Activated naive CD4-positive, alpha-beta T cell treated with anti-CD3 and anti-CD28 coated beads for 36 hours (primary cell): ENCODE measurements at regions of chr12 and their contacts with region 1.

Region 1: GRCh38 chr12:93894391-93895088 is 217.4 kb downstream of the CRADD start:
- DNase-seq: no peak
- H3K4me3 Mint-ChIP-seq: no peak overlapping the region
- H3K27ac Mint-ChIP-seq: no peak overlapping the region
- H3K4me1 Mint-ChIP-seq: peaks cover 18% of the 10 kb centered on the region
- H3K27me3 Mint-ChIP-seq: no peaks in the 10 kb centered on the region

Region 2: DNA sequence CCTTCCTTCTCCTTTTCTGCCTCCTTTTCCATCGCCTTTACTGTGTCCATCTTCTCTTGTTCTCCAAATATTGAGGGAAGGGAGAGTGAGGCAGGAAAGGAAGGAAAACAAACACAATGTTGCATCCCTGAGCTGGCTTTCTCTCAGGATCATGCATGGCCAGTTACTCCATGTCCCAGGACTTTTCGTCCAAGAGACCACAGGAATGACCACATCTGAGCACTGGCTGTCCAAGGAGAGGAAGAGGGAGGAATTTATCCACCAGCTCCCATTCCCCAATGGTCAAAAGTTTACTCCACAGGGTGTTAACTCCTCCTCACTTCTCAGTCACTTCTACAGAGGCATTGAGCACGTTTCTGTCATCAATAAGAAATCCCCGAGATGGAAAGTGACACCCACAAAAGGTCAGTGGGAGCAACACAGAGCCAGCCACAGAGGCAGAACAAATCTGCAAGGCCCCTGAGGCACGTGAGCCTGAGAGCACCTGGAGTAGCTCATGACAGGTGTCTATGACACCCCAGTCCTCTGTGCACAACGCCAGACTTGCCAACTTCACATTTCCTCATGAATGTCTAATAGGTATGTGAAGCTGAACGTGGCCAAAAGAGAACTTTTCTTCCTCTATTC is 694.1 kb before region 1 on chr12:
- CTCF ChIA-PET with region 1: no interaction called
- intact Hi-C with region 1: loop called (anchors 5 kb)
- DNase-seq: no peak
- H3K4me3 Mint-ChIP-seq: no peak overlapping the region
- H3K27ac Mint-ChIP-seq: no peak overlapping the region
- H3K4me1 Mint-ChIP-seq: no peaks in the 10 kb centered on the region
- H3K27me3 Mint-ChIP-seq: peaks cover 2% of the 10 kb centered on the region